ENCODE measurements at regions of chr3 and their contacts with region 1.

Region 1: GRCh38 chr3:183385698-183386613 is 42.5 kb downstream of the MCF2L2 start:
- DNase-seq: no peak
- H3K4me3 ChIP-seq: no peak overlapping the region
- H3K27me3 ChIP-seq: no peaks in the 10 kb centered on the region; the same call in 1 of the 2 replicates
- CTCF ChIP-seq: peak; percentile 69

Region 2: DNA sequence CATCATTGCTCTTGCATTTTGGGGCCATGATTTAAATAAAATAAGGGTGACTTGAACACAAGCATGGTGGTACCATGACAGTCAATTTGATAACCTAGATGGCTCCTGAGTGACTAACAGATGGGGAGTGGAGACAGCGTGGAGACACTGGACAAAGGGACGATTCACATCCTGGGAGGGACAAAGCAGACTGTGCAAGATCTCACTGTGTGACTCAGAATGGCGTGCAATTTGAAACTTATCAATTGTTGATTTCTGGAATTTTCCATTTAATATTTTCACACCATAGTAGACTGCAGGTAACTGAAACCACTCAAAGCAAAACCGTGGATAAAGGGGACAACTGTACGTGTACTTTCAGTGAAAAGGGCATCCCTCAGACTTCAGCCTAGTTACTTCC is 312.1 kb before region 1 on chr3:
- CTCF ChIA-PET with region 1: no interaction called
- POLR2A ChIA-PET with region 1: no interaction called
- DNase-seq: no peak
- H3K4me3 ChIP-seq: no peak overlapping the region
- H3K27me3 ChIP-seq: no peaks in the 10 kb centered on the region
- CTCF ChIP-seq: no peak

Region 3: DNA sequence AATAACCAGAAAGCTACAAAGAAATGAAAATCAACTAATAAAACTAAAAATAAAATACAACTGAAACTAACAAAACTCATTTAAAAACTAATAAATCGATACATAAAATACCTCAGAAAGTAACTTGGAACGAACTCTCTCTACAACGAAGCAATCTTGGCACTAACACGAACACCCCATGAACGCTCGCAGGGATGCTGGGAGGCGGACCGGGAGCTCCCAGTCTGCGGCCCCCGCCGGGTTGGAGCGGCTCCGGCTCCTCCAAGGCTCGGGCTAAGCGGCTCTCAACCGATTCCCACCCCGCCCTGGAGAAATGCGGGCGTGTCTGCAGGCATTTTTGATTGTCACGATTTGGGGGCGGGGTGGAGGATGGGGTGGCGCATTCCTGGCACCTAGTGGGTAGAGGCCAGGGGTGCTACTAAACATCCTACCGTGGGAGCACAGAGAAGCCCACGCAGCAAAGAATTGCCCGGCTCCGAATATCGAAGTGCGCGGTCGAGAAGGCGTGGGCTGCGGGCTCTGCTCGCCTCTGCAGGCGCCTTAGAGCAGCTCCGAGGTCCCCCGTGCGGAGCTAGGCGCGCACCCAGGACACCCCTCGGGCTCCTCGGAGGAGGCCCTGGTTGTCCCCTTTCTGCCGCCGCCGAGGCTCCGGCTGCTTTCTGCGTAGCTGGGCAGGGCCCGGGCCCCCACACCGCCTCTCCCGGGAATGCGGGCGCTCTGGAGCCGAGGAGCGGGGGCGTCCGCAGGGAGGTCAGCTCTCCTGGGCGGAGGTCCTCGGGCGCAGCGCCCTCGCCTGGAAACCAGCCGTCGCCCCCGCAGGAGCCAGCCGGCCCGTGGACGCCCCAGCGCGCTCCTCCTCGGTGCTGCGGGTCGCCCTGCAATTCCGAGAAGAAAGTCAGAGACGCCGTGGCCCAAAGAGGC is 207.1 kb before region 1 on chr3:
- CTCF ChIA-PET with region 1: interaction called, 284 read pairs
- POLR2A ChIA-PET with region 1: no interaction called
- DNase-seq: no peak
- H3K4me3 ChIP-seq: peak overlapping the region; percentile 31
- H3K27me3 ChIP-seq: peaks cover 20% of the 10 kb centered on the region
- CTCF ChIP-seq: peak; percentile 9; the same call in 1 of the 2 replicates

Region 4: DNA sequence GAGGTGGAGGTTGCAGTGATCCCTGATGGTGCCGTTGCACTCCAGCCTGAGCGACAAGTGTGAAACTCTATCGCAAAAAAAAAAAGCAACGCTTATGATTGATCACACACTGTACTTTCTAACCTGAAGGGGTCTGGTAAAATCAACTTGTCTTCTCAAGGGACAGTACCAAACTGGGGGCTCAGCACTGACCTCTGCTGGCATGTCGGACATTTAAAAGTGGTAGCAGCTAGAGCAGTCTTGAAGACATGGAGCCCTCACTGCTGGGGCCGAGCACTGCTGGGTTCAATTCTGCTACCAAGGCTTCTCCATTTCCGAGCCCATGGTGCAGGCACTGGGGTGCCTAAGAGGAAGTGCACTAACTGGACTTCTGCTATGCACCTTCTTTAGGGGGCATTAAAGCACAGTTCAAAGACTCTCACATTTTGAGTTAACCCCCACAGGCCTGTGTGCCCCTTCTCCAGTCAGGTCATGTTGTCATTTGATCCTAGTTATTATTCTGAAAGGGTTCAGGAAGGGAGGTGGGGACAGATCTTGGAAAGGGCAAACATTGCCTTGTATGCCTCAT is 197.0 kb before region 1 on chr3:
- CTCF ChIA-PET with region 1: interaction called, 284 read pairs
- POLR2A ChIA-PET with region 1: interaction called, 19 read pairs
- DNase-seq: no peak
- H3K4me3 ChIP-seq: no peak overlapping the region
- H3K27me3 ChIP-seq: no peaks in the 10 kb centered on the region
- CTCF ChIP-seq: no peak; the same call in 1 of the 2 replicates

Region 5: DNA sequence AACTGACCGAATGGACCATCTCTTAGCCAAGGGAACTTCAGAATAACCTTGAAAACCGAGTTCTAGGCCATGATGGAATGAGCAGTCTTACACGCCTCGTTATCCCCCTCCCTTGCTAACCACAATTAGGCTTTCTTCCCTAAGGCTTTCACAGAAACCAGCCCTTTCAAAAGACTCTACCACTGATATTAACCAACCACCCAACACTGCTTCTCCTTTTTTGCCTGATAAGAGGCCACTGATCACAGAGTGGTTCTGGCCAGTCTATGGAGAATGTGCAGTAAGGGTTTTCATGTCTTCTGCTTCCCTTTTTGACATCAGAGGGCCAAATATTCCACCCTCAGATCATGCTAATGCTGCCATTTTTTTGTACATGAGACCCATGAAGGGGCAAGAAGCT is 16.8 kb before region 1 on chr3:
- CTCF ChIA-PET with region 1: interaction called, 23 read pairs
- POLR2A ChIA-PET with region 1: no interaction called
- DNase-seq: no peak
- H3K4me3 ChIP-seq: no peak overlapping the region
- H3K27me3 ChIP-seq: no peaks in the 10 kb centered on the region
- CTCF ChIP-seq: no peak

Measured in BJ (cell line).